CD8-positive, alpha-beta T cell (primary cell): ENCODE measurements at regions of chr2 and their contacts with region 1.

Region 1: GRCh38 chr2:118992740-118993391 is 50.9 kb downstream of the MARCO start:
- DNase-seq: peak in 4 of 9 experiments; percentile 11 to 70 (median 24)
- ATAC-seq: peak; percentile 31
- H3K4me3 ChIP-seq: no peak overlapping the region
- H3K4me3 Mint-ChIP-seq: no peak overlapping the region
- H3K27ac ChIP-seq: no peak overlapping the region
- H3K27ac Mint-ChIP-seq: no peak overlapping the region
- H3K4me1 ChIP-seq: peaks cover 10% of the 10 kb centered on the region
- H3K4me1 Mint-ChIP-seq: peaks cover 10% of the 10 kb centered on the region
- H3K27me3 ChIP-seq: no peaks in the 10 kb centered on the region
- H3K27me3 Mint-ChIP-seq: peaks cover 6% of the 10 kb centered on the region
- CTCF ChIP-seq: no peak

Region 2: GRCh38 chr2:118902266-118903028 is 90.4 kb before region 1 on chr2:
- CTCF ChIA-PET with region 1: no interaction called
- POLR2A ChIA-PET with region 1: no interaction called
- intact Hi-C with region 1: loop called in 1 of 2 experiments (anchors 5 kb)
- DNase-seq: peak in 3 of 9 experiments; percentile 10 to 58 (median 28)
- ATAC-seq: no peak
- H3K4me3 ChIP-seq: peak overlapping the region in 1 of 2 experiments; percentile 8
- H3K4me3 Mint-ChIP-seq: peak overlapping the region; percentile 47
- H3K27ac ChIP-seq: peak overlapping the region; percentile 5 to 18
- H3K27ac Mint-ChIP-seq: peak overlapping the region; percentile 87
- H3K4me1 ChIP-seq: peaks cover 25% of the 10 kb centered on the region
- H3K4me1 Mint-ChIP-seq: peaks cover 28% of the 10 kb centered on the region
- H3K27me3 ChIP-seq: no peaks in the 10 kb centered on the region
- H3K27me3 Mint-ChIP-seq: peaks cover 5% of the 10 kb centered on the region
- CTCF ChIP-seq: no peak

Region 3: GRCh38 chr2:119008108-119008507 is 15.2 kb after region 1 on chr2:
- CTCF ChIA-PET with region 1: no interaction called
- POLR2A ChIA-PET with region 1: no interaction called
- intact Hi-C with region 1: no loop called
- DNase-seq: peak in 1 of 9 experiments; percentile 41
- ATAC-seq: no peak
- H3K4me3 ChIP-seq: no peak overlapping the region
- H3K4me3 Mint-ChIP-seq: no peak overlapping the region
- H3K27ac ChIP-seq: no peak overlapping the region
- H3K27ac Mint-ChIP-seq: no peak overlapping the region
- H3K4me1 ChIP-seq: no peaks in the 10 kb centered on the region
- H3K4me1 Mint-ChIP-seq: peaks cover 2% of the 10 kb centered on the region
- H3K27me3 ChIP-seq: peaks cover 0 to 7% of the 10 kb centered on the region in 2 experiments
- H3K27me3 Mint-ChIP-seq: peaks cover 29% of the 10 kb centered on the region
- CTCF ChIP-seq: no peak

Region 4: DNA sequence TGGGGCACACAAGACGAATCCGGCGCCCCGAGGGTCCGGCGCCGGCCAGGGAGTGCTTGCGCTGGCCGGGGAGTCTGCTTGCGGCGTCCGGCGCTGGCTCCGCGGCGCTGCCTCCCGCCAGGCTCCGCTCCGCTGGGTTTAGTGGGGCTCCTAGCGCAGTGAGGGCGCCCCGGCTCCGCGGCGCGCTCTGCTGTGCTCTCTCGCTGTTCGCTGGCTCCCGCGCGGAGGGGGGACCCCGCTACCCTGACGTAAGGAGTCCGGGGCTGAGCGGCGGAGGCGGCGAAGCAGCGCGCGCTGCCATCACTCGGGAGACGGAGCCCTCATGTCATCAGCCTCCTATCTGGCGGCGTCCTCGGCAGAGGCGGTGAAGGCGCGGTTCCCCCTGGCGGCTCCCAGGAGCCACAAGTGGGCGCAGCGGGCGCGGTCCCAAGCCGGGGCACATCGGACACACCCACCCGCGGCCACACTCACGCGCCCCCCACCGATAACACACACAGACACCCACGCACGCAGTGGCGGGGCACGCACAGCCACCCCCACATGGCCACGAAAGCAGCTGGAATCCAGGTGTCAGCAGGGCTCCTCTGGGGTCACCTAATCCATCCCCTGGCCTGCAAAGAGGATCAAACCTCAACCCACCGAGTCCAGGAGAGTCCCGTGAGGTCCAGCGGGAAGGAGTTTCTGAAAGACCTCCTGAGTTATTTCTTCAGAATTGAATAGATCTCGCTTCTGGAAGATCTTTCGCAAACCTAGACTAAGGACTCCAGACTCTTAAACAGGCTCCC is 165.9 kb after region 1 on chr2 and contains the start of gene C1QL2:
- CTCF ChIA-PET with region 1: no interaction called
- POLR2A ChIA-PET with region 1: no interaction called
- intact Hi-C with region 1: no loop called
- DNase-seq: no peak
- ATAC-seq: no peak
- H3K4me3 ChIP-seq: no peak within 1 kb of the TSS
- H3K4me3 Mint-ChIP-seq: no peak within 1 kb of the TSS
- H3K27ac ChIP-seq: no peak within 1 kb of the TSS
- H3K27ac Mint-ChIP-seq: no peak within 1 kb of the TSS
- H3K4me1 ChIP-seq: no peaks in the 10 kb centered on the region
- H3K4me1 Mint-ChIP-seq: no peaks in the 10 kb centered on the region
- H3K27me3 ChIP-seq: peaks cover 3 to 6% of the 10 kb centered on the region in 2 experiments
- H3K27me3 Mint-ChIP-seq: peaks cover 52% of the 10 kb centered on the region
- CTCF ChIP-seq: no peak
- total RNA-seq, gene C1QL2: not detected